ENCODE measurements at regions of chr9 and their contacts with region 1.

Region 1: GRCh38 chr9:17531642-17532254 is 47.1 kb upstream of the SH3GL2 start:
- DNase-seq: peak; percentile 56
- H3K4me3 Mint-ChIP-seq: no peak overlapping the region
- H3K27ac Mint-ChIP-seq: no peak overlapping the region
- H3K4me1 Mint-ChIP-seq: no peaks in the 10 kb centered on the region
- H3K27me3 Mint-ChIP-seq: peaks cover 36% of the 10 kb centered on the region
- CTCF ChIP-seq: peak; percentile 81

Region 2: GRCh38 chr9:17519761-17520160 is 12.0 kb before region 1 on chr9:
- CTCF ChIA-PET with region 1: interaction called, 18 read pairs
- POLR2A ChIA-PET with region 1: no interaction called
- intact Hi-C with region 1: no loop called
- DNase-seq: no peak
- H3K4me3 Mint-ChIP-seq: no peak overlapping the region
- H3K27ac Mint-ChIP-seq: no peak overlapping the region
- H3K4me1 Mint-ChIP-seq: no peaks in the 10 kb centered on the region
- H3K27me3 Mint-ChIP-seq: peaks cover 24% of the 10 kb centered on the region
- CTCF ChIP-seq: no peak

Region 3: DNA sequence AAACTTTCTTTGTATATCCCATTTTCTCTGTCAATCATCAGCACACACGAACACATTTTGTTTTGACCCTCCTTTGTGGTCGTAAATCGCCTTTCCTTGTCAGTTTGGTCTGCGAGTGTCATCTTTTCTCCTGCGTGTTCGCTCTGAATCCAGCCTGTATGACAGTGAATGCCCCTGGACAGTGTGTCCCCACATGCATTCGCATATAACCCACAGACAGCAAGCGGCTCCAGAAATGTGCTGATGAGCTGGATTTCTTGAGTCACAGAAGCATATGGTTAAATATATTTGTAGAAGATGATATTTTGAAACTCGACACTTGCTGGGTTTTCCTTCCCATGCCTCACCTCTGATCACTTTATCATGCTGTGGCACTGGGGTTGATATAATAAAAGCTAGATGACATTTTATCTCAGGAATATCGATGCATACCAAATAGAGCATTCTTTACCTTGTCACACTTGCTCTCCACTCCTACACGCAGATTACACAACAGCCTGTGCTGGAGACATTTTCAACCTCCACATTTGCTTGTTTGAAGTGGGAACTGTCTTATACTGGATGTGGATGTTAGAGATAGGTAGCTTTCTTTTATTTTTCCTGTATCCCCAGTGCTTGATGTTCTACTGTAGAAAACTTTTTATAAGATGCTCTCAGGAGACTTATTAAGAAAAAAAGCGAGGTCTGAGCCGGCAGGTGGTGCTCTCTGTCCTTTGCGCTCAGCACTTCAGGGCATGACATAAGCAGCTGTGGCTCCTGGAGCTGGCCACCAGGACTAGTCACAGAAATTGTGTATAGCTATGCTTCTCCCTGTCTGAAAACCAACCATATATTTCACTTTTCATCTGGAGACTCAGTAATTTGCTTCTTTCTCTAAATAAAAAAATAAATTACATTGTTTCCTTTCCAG is 262.2 kb after region 1 on chr9:
- CTCF ChIA-PET with region 1: interaction called, 73 read pairs
- POLR2A ChIA-PET with region 1: no interaction called
- intact Hi-C with region 1: no loop called
- DNase-seq: peak; percentile 49
- H3K4me3 Mint-ChIP-seq: no peak overlapping the region
- H3K27ac Mint-ChIP-seq: no peak overlapping the region
- H3K4me1 Mint-ChIP-seq: no peaks in the 10 kb centered on the region
- H3K27me3 Mint-ChIP-seq: peaks cover 64% of the 10 kb centered on the region
- CTCF ChIP-seq: no peak

Region 4: DNA sequence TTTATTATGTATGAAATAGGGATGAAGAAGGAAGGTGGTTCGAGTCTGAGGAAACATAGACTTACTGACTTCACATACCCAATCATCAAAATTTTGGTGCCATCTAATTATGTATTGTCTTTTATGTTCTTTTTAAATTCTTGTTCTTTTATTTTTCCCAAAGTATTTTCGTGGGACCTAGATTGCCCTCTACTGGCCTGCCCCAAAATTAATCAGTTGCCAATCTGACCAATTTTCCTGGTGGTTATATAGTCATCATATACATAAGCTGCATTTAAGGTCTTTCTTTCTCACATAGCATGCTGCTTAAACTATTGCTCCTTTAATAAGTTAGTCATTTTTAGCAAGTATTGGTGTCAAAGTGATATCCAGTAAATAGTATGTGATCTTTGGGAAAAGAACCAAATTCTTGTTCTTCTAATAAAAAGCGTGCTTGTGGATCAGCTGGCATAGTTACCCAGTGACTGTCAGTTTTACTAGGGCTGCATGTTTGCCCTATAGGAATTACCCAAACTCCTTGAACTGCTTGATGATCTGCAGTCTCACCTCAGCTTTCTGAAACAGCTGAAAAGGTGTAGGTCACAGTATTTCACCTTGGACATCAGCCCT is 270.6 kb after region 1 on chr9:
- CTCF ChIA-PET with region 1: interaction called, 73 read pairs
- POLR2A ChIA-PET with region 1: interaction called, 3 read pairs
- intact Hi-C with region 1: loop called (anchors 1 kb)
- DNase-seq: peak; percentile 28
- H3K4me3 Mint-ChIP-seq: no peak overlapping the region
- H3K27ac Mint-ChIP-seq: no peak overlapping the region
- H3K4me1 Mint-ChIP-seq: no peaks in the 10 kb centered on the region
- H3K27me3 Mint-ChIP-seq: peaks cover 33% of the 10 kb centered on the region
- CTCF ChIP-seq: peak; percentile 52

Region 5: DNA sequence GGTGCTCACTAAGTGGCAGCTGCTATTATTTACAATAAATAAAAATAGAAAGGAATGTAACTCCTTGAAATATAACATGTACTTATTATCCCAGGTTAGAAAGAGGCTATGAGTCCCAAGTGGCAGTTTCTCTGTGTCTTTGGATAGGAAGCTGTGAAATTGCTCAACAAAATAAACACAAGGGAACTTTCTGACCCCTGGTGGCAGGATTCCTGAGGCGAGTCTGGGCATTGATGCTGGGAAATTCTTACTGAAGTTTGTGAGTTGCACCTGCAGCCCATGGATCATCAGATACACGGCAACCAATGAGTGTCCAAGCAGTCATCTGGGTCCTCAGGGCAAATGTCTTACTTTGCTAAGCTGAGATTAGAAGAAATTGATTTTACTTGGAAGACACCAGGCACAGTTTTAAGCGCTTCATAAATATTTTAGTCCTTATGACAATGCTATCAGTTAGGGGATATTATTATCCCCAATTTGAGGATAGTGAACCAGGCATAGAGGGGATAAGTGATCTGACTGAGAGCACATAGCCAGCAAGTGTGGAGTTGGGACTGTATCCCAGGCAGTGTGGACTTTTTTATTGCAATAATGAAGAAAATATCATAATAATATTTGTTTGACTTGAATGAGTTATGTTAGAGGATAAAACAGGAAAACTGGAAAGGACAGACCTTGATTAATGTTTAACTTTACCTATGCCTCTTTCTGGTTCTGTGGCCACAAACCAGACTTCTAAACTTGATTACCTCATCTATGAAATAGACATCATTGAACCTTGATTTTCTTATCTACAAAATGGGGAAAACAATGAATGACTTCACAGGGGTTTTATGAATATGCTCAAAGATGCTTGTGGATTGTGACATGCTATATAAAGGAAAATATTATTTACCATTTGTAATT is 676.7 kb after region 1 on chr9:
- CTCF ChIA-PET with region 1: interaction called, 23 read pairs
- POLR2A ChIA-PET with region 1: no interaction called
- intact Hi-C with region 1: no loop called
- DNase-seq: peak; percentile 71
- H3K4me3 Mint-ChIP-seq: no peak overlapping the region
- H3K27ac Mint-ChIP-seq: no peak overlapping the region
- H3K4me1 Mint-ChIP-seq: no peaks in the 10 kb centered on the region
- H3K27me3 Mint-ChIP-seq: peaks cover 62% of the 10 kb centered on the region
- CTCF ChIP-seq: peak; percentile 54

Region 6: GRCh38 chr9:19028835-19029451 is 1497.2 kb after region 1 on chr9:
- CTCF ChIA-PET with region 1: interaction called, 7 read pairs
- POLR2A ChIA-PET with region 1: no interaction called
- intact Hi-C with region 1: loop called (anchors 2 kb)
- DNase-seq: peak; percentile 79
- H3K4me3 Mint-ChIP-seq: no peak overlapping the region
- H3K27ac Mint-ChIP-seq: no peak overlapping the region
- H3K4me1 Mint-ChIP-seq: peaks cover 11% of the 10 kb centered on the region
- H3K27me3 Mint-ChIP-seq: peaks cover 2% of the 10 kb centered on the region
- CTCF ChIP-seq: peak; percentile 64

Region 7: GRCh38 chr9:19456996-19457692 is 1925.4 kb after region 1 on chr9:
- CTCF ChIA-PET with region 1: interaction called, 3 read pairs
- POLR2A ChIA-PET with region 1: no interaction called
- intact Hi-C with region 1: loop called (anchors 10 kb)
- DNase-seq: peak; percentile 80
- H3K4me3 Mint-ChIP-seq: peak overlapping the region; percentile 33
- H3K27ac Mint-ChIP-seq: no peak overlapping the region
- H3K4me1 Mint-ChIP-seq: no peaks in the 10 kb centered on the region
- H3K27me3 Mint-ChIP-seq: no peaks in the 10 kb centered on the region
- CTCF ChIP-seq: peak; percentile 91